CD4-positive, alpha-beta memory T cell (primary cell): ENCODE measurements at regions of chr19 and their contacts with region 1.

Region 1: DNA sequence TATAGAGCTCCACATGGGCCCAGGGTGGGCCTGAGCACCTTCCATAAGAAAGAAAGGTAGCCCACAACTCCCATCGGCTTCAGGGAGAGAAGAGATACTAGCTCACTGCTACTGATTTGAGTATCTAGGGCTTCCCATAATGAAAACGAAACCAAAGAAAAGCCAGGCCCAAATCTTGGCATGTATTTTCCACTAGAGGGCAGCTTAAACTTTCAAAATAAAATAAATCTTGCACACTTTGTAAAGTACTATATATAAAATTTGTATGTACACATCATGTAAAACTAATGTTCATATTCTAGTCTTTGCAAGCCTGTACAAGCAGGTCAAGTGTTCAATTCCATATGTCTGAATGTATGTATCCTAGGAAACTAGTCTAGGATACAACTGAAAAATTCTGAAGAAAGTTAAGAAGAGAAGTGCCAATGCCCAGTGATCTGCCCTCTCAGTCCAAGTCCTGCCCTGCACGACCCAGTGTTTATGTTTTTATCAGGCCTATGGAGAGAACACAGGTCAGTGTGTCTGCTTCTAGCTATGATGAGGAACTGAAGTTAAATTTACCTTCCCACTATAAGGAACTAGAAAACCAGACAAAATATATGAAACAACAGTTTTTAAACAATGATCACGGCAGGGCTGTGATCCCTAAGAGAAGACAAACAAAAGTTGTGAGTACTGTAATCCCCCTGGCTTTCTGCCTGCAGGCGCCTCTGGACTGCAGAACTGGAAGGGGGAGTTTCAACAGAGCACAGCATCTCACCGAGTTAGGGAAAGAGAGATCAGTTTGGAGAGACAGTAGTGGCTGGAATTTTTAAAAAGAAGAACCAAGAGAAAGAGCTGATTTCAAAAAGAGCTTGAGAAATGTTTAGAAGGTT is 475.7 kb downstream of the UQCRFS1 start:
- DNase-seq: peak in 3 of 5 donors; percentile 7 to 26 (median 21)
- H3K4me3 ChIP-seq: no peak overlapping the region
- H3K4me3 Mint-ChIP-seq: peak overlapping the region in 6 of 8 donors; percentile 11 to 52 (median 32)
- H3K27ac ChIP-seq: no peak overlapping the region
- H3K27ac Mint-ChIP-seq: peak overlapping the region in 6 of 7 donors; percentile 16 to 84 (median 54)
- H3K4me1 ChIP-seq: peaks cover 7% of the 10 kb centered on the region
- H3K4me1 Mint-ChIP-seq: peaks cover 2 to 5% (median 4%) of the 10 kb centered on the region in 4 donors
- H3K27me3 ChIP-seq: no peaks in the 10 kb centered on the region
- H3K27me3 Mint-ChIP-seq: no peaks in the 10 kb centered on the region

Region 2: DNA sequence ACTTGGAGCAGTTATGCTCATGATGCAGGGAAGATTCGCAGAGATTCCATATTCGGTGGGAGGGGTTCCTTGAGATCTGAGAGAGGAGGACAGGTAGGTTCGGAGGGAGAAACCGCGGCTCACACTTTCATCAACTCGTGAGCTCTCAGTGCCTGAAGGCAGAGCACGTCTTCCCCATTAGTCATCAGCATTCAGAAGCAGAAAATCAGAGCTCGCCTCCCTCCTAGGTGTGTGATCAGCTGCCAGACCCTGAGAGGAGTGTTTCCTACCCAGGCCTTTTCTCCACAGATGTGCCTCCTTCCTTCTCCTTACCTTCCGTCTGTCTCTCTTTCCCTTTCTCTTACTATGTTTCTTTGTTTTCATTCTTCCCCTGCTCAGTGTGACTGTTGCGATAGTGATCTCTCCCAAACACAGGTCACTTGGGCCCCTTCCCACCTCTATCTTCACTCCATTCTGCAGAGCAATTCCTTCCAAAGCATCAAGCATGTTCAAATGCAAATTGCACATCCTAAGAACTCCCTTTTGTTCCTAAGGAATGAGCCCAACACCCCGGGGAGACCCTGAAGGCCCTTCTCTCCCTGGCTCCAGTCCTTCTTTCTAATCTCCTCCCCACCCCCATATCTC is 86.2 kb after region 1 on chr19:
- CTCF ChIA-PET with region 1: no interaction called
- POLR2A ChIA-PET with region 1: no interaction called
- intact Hi-C with region 1: no loop called
- DNase-seq: no peak
- H3K4me3 ChIP-seq: no peak overlapping the region
- H3K4me3 Mint-ChIP-seq: no peak overlapping the region
- H3K27ac ChIP-seq: no peak overlapping the region
- H3K27ac Mint-ChIP-seq: no peak overlapping the region
- H3K4me1 ChIP-seq: no peaks in the 10 kb centered on the region
- H3K4me1 Mint-ChIP-seq: no peaks in the 10 kb centered on the region
- H3K27me3 ChIP-seq: no peaks in the 10 kb centered on the region
- H3K27me3 Mint-ChIP-seq: peaks cover 0 to 2% of the 10 kb centered on the region in 2 donors

Region 3: GRCh38 chr19:28878862-28879566 is 141.8 kb after region 1 on chr19:
- CTCF ChIA-PET with region 1: interaction called, 6 read pairs
- POLR2A ChIA-PET with region 1: no interaction called
- intact Hi-C with region 1: loop called (anchors 2 kb)
- DNase-seq: peak in 4 of 5 donors; percentile 13 to 27 (median 14)
- H3K4me3 ChIP-seq: no peak overlapping the region
- H3K4me3 Mint-ChIP-seq: no peak overlapping the region
- H3K27ac ChIP-seq: no peak overlapping the region
- H3K27ac Mint-ChIP-seq: no peak overlapping the region
- H3K4me1 ChIP-seq: no peaks in the 10 kb centered on the region
- H3K4me1 Mint-ChIP-seq: no peaks in the 10 kb centered on the region
- H3K27me3 ChIP-seq: no peaks in the 10 kb centered on the region
- H3K27me3 Mint-ChIP-seq: no peaks in the 10 kb centered on the region